Prostate gland (tissue), 2 donors: ENCODE measurements at regions of chr2 and their contacts with region 1.

Region 1: DNA sequence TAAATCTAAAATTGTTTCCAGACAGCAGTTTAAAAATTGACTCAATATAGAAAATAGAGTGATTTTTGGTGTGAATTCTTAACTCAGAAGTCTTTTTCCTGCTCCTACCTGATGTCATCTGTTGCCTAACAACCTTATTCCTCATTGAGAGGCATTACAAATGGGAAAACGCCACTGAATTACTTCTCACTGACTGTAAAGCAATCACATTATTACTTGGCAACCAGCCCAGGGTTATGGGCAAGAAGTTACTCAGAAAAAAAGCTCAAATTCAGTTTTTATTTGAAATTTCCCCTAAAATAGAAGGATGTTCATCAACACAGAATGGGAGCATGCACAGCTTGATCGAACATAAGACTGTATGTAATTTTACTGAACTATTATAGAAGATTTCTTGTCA is 201.8 kb upstream of the GULP1 start:
- DNase-seq: no peak
- H3K4me3 ChIP-seq: no peak overlapping the region
- H3K27ac ChIP-seq: no peak overlapping the region
- H3K4me1 ChIP-seq: no peaks in the 10 kb centered on the region
- H3K27me3 ChIP-seq: no peaks in the 10 kb centered on the region
- CTCF ChIP-seq: no peak
- POLR2A ChIP-seq: no peak

Region 2: GRCh38 chr2:187826023-187826422 is 263.9 kb before region 1 on chr2:
- intact Hi-C with region 1: loop called (anchors 5 kb)
- DNase-seq: no peak
- H3K4me3 ChIP-seq: no peak overlapping the region
- H3K27ac ChIP-seq: no peak overlapping the region
- H3K4me1 ChIP-seq: no peaks in the 10 kb centered on the region
- H3K27me3 ChIP-seq: no peaks in the 10 kb centered on the region
- CTCF ChIP-seq: no peak
- POLR2A ChIP-seq: no peak

Region 3: DNA sequence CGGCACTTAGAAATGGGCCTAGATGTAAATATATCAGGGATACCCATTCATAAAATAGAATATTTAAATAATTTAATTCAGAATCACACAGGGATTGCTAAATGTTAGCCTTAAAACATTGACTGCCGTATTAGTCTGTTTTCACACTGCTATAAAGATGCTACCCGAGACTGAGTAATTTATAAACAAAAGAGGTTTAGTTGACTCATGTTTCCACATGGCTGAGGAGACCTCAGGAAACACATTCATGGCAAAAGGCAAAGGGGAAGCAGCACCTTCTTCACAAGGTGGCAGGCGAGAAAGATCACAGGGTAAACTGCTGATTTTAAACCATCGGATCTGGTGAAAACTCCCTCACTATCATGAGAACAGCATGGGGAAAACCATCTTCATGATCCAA is 21.8 kb before region 1 on chr2:
- intact Hi-C with region 1: no loop called
- DNase-seq: no peak
- H3K4me3 ChIP-seq: no peak overlapping the region
- H3K27ac ChIP-seq: no peak overlapping the region
- H3K4me1 ChIP-seq: no peaks in the 10 kb centered on the region
- H3K27me3 ChIP-seq: no peaks in the 10 kb centered on the region
- CTCF ChIP-seq: no peak
- POLR2A ChIP-seq: no peak